Breast epithelium (tissue), 4 donors: ENCODE measurements at regions of chr5 and their contacts with region 1.

Region 1: GRCh38 chr5:122295138-122295537 is 16.9 kb upstream of the SNCAIP start:
- DNase-seq: no peak
- H3K4me3 ChIP-seq: no peak overlapping the region
- H3K27ac ChIP-seq: no peak overlapping the region
- H3K4me1 ChIP-seq: no peaks in the 10 kb centered on the region
- H3K27me3 ChIP-seq: no peaks in the 10 kb centered on the region
- CTCF ChIP-seq: no peak
- POLR2A ChIP-seq: no peak

Region 2: GRCh38 chr5:122366501-122366900 is 71.4 kb after region 1 on chr5:
- intact Hi-C with region 1: no loop called
- DNase-seq: no peak
- H3K4me3 ChIP-seq: no peak overlapping the region
- H3K27ac ChIP-seq: no peak overlapping the region
- H3K4me1 ChIP-seq: no peaks in the 10 kb centered on the region
- H3K27me3 ChIP-seq: no peaks in the 10 kb centered on the region
- CTCF ChIP-seq: no peak
- POLR2A ChIP-seq: no peak

Region 3: DNA sequence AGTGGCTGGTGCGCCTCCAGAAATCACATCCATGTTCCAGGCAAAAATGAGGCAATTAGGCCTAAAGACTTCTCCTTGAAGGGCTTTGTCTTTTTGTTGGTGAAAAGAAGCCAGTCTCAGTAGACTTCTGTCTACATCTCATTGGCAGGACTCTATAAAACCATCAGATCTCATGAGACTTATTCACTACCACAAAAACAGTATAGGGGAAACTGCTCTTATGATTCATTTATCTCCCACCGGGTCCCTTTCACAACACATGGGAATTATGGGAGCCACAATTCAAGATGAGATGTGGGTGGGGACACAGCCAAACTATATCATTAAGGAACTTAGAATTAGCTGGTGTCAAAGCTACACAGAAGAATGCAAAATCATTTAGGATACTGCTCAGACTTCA is 402.1 kb after region 1 on chr5:
- intact Hi-C with region 1: loop called (anchors 10 kb)
- DNase-seq: no peak
- H3K4me3 ChIP-seq: no peak overlapping the region
- H3K27ac ChIP-seq: no peak overlapping the region
- H3K4me1 ChIP-seq: no peaks in the 10 kb centered on the region
- H3K27me3 ChIP-seq: no peaks in the 10 kb centered on the region
- CTCF ChIP-seq: no peak
- POLR2A ChIP-seq: no peak

Region 4: DNA sequence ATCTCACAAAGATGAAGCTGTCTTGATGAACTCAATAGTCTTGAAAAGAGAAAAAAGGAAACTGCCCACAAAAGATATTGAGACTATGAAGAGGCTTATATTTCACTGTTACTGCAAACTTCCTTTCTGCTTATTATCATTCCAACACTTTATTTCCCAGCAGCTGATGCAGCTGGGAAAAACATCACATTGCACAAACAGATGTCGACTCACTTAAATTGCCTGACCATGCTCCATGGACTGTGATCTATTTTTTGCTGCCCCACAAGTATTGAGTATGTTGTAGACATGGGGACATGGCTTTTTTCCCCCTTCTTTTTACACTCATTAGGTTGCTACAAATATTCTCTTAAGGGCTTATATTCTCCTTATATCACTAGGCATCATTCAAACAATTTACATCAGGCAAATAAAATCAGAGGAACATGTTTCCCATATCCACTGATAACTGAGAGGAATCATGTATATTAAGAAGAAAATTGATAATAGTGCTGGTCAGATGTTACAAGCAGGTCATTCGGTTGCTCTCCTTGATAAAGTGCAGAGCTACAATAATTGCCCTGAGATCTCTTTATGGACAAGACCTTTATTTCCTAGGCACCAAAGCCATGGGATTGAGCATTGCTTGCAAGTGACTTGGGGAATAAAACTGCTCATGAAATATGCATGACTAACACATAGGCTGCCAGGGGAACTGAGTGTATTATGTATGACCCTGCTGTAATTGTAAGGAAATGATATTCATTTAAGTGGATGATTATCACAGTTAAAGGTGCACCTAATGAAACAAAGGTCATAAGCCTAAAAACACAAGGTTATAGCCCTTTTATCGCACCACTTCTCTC is 1941.4 kb after region 1 on chr5:
- intact Hi-C with region 1: no loop called
- DNase-seq: no peak
- H3K4me3 ChIP-seq: no peak overlapping the region
- H3K27ac ChIP-seq: no peak overlapping the region
- H3K4me1 ChIP-seq: no peaks in the 10 kb centered on the region
- H3K27me3 ChIP-seq: no peaks in the 10 kb centered on the region
- CTCF ChIP-seq: no peak
- POLR2A ChIP-seq: no peak